ENCODE measurements at regions of chr19 and their contacts with region 1.

Region 1: GRCh38 chr19:42244347-42245220 is 2.2 kb upstream of the GSK3A start:
- DNase-seq: peak; percentile 96
- ATAC-seq: peak; percentile 40
- H3K4me3 ChIP-seq: peak overlapping the region; percentile 67 to 97 (median 87)
- H3K4me3 Mint-ChIP-seq: peak overlapping the region; percentile 100
- H3K27ac ChIP-seq: peak overlapping the region; percentile 64 to 71
- H3K27ac Mint-ChIP-seq: peak overlapping the region; percentile 99
- H3K4me1 ChIP-seq: peaks cover 30 to 40% of the 10 kb centered on the region in 2 donors
- H3K4me1 Mint-ChIP-seq: peaks cover 53% of the 10 kb centered on the region
- H3K27me3 ChIP-seq: no peaks in the 10 kb centered on the region
- H3K27me3 Mint-ChIP-seq: no peaks in the 10 kb centered on the region
- CTCF ChIP-seq: peak; percentile 70

Region 2: DNA sequence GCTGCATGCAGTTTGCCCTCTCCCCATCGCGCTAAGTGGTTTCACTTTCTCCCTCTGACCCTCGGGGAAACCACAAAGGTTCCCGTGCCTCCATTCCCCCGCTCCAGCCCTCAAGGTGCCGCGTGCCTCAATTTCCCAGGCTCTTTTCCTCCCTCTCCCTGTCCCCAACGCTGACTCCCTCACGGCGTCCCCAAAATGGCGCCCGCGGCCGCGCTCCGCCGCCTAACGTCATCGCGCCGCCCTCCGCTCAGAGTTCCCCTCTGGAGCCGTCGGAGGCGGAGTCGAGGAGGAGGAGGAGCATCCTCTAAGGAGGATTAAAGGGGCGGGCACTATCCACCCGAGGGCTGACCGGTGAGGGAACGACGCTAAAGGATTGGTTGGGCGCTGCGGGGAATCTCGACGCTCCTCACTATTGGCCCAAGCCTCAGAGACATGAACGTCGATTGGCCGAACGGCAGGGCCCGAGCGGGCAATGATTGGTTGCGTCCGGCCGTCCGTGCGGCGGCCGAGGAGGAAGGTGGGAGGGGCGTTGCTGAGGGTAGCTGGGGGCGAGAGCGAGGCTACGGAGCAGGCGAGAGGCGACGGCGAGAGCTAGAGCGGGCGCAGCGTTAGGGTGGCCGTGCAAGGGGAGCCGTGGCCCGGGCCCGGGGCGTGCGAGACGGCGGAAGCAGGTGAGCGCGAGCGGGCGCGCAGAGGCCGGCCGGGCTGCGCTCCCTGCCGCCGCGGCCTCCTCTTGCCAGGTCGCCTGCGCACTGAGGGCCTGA is 168.8 kb before region 1 on chr19 and contains the start of gene ZNF574:
- CTCF ChIA-PET with region 1: no interaction called
- POLR2A ChIA-PET with region 1: no interaction called
- intact Hi-C with region 1: loop called (anchors 1 kb)
- DNase-seq: peak; percentile 100
- ATAC-seq: peak; percentile 94
- H3K4me3 ChIP-seq: peak within 1 kb of the TSS; percentile 56 to 93 (median 86)
- H3K4me3 Mint-ChIP-seq: peak within 1 kb of the TSS; percentile 97
- H3K27ac ChIP-seq: peak within 1 kb of the TSS; percentile 95 to 99
- H3K27ac Mint-ChIP-seq: peak within 1 kb of the TSS; percentile 99
- H3K4me1 ChIP-seq: peaks cover 20 to 23% of the 10 kb centered on the region in 2 donors
- H3K4me1 Mint-ChIP-seq: peaks cover 35% of the 10 kb centered on the region
- H3K27me3 ChIP-seq: no peaks in the 10 kb centered on the region
- H3K27me3 Mint-ChIP-seq: peaks cover 5% of the 10 kb centered on the region
- CTCF ChIP-seq: no peak
- total RNA-seq, gene ZNF574: 27.4 and 28.4 TPM in 2 replicates

Region 3: GRCh38 chr19:42132851-42133528 is 111.6 kb before region 1 on chr19:
- CTCF ChIA-PET with region 1: interaction called, 37 read pairs
- POLR2A ChIA-PET with region 1: interaction called, 5 read pairs
- intact Hi-C with region 1: loop called (anchors 1 kb)
- DNase-seq: peak; percentile 93
- ATAC-seq: peak; percentile 42
- H3K4me3 ChIP-seq: peak overlapping the region; percentile 92 to 100 (median 98)
- H3K4me3 Mint-ChIP-seq: peak overlapping the region; percentile 92
- H3K27ac ChIP-seq: peak overlapping the region; percentile 51 to 71
- H3K27ac Mint-ChIP-seq: peak overlapping the region; percentile 97
- H3K4me1 ChIP-seq: peaks cover 41 to 70% of the 10 kb centered on the region in 2 donors
- H3K4me1 Mint-ChIP-seq: peaks cover 77% of the 10 kb centered on the region
- H3K27me3 ChIP-seq: no peaks in the 10 kb centered on the region
- H3K27me3 Mint-ChIP-seq: no peaks in the 10 kb centered on the region
- CTCF ChIP-seq: peak; percentile 100

Region 4: DNA sequence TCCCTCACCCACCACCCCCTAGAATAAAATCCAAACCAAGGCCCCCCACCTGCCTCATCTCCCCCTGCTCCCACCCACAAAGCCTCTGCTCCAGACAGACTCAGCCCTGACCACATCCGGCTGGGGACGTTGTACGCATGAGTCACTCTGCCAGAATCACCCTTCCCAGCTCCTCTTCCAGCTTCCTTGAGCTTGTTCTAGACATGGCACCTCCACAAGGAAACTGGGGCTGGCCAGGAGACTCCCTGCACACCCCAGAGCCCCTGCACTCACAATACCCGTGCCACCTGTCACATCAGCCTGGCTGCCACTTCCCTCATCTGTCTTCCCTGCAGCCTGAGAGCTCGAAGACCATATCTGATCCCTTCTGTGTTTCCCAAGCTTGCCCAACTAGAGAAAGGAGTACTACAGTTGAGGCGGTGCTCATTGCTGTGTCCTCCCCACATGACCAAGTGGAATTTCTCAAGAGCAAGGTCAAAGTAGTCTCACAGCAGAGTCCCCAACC is 36.8 kb before region 1 on chr19:
- CTCF ChIA-PET with region 1: no interaction called
- POLR2A ChIA-PET with region 1: no interaction called
- intact Hi-C with region 1: no loop called
- DNase-seq: no peak
- ATAC-seq: no peak
- H3K4me3 ChIP-seq: no peak overlapping the region
- H3K4me3 Mint-ChIP-seq: no peak overlapping the region
- H3K27ac ChIP-seq: no peak overlapping the region
- H3K27ac Mint-ChIP-seq: peak overlapping the region; percentile 46
- H3K4me1 ChIP-seq: peaks cover 15% of the 10 kb centered on the region in 2 donors
- H3K4me1 Mint-ChIP-seq: peaks cover 42% of the 10 kb centered on the region
- H3K27me3 ChIP-seq: no peaks in the 10 kb centered on the region
- H3K27me3 Mint-ChIP-seq: no peaks in the 10 kb centered on the region
- CTCF ChIP-seq: no peak

Region 5: DNA sequence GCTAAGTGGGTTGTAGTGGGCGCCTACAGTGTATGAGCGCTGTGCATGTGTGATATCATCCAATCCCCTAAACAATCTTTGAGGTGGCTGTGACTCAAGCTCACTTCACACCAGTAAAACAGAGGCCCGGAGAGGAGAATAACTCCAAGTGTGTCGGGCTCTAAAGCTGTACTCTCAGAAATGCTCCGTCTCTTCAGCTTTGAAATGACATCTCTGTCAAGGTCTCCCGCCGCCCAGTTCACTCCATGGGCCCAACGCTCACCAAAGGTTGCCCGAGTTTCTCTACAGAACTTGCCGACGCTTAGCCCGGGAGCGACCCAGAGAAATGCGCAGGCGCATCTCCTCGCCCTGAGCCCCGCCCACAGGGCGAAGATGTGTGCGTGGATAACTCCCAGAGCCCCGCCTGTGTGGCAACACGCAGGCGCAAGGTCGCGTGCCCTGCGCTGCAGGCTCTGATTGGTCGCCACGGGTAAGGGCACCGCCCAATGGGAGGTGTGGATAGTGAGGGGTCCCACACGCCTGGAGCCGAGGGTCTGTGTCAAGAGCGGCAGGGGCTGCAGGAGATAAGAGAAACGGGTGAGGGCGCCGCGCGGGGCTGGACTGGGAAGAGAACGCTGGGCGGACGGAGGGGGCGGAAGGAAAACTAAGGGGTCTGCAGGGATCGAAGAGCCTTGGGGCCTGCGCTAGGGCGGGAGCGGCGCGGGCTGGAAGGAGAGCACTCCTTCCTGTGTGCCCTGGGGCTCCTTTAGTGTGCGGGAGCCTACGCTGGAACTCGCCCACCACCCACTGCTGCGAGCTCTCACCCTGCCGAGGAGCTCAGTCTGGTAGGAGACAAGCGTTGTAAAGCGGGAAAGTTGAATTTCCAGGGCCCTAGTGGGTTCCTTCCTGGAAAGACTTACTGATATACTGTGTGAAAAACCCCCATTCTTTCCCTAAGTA is 24.5 kb before region 1 on chr19 and contains the start of gene ZNF526:
- CTCF ChIA-PET with region 1: interaction called, 12 read pairs
- POLR2A ChIA-PET with region 1: interaction called, 13 read pairs
- intact Hi-C with region 1: loop called (anchors 1 kb)
- DNase-seq: peak; percentile 97
- ATAC-seq: peak; percentile 82
- H3K4me3 ChIP-seq: peak within 1 kb of the TSS; percentile 72 to 96 (median 85)
- H3K4me3 Mint-ChIP-seq: peak within 1 kb of the TSS; percentile 96
- H3K27ac ChIP-seq: peak within 1 kb of the TSS; percentile 66 to 88
- H3K27ac Mint-ChIP-seq: peak within 1 kb of the TSS; percentile 92
- H3K4me1 ChIP-seq: peaks cover 41 to 51% of the 10 kb centered on the region in 2 donors
- H3K4me1 Mint-ChIP-seq: peaks cover 59% of the 10 kb centered on the region
- H3K27me3 ChIP-seq: no peaks in the 10 kb centered on the region
- H3K27me3 Mint-ChIP-seq: no peaks in the 10 kb centered on the region
- CTCF ChIP-seq: no peak
- total RNA-seq, gene ZNF526: 19.0 and 21.3 TPM in 2 replicates

Region 6: DNA sequence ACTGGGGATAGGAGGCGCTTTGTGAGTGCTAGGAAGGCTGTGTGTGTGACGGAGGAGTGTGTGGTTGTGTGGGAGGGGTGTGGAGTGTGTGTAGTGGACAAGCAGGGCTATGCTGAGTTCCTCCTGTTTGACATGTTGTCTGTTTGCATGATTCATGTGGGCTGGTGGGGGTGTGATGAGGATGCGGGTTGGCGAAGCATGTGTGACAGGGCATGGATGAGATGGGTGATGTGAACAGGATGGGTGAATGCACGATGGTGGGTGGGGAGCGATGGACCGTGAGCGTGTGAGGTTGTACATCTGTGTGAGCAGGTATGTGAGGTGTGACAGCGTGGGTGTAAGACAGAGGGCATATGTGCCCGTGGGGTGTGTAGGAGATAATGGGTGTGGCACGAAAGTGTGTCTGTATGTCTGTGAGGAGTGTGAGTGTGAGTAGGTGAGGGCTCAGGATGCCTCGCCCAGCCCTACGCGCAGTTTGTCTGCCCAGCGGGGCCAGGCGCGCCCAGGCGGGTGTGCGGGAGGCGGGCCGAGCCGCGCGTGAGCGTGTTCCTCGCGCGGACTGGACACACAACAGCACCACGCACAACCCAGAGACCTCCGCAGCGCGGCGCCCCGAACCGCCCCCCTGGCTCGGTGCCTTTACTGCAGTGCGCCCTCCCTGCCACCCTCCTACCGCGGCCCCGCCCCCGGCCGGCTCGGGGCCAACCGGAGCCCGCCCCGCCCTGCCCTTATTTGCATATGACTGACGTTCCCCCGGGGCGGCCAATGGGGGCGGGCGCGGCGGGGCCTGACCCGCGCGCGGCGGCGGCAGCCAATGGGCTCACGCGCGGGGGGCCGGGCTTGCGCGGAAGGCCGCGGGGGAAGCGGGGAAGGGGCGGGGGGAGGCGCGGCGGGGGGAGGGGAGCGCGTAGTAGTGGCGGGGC is 38.8 kb after region 1 on chr19:
- CTCF ChIA-PET with region 1: interaction called, 89 read pairs
- POLR2A ChIA-PET with region 1: interaction called, 23 read pairs
- intact Hi-C with region 1: loop called (anchors 1 kb)
- DNase-seq: peak; percentile 98
- ATAC-seq: peak; percentile 64
- H3K4me3 ChIP-seq: peak overlapping the region; percentile 41 to 72 (median 65)
- H3K4me3 Mint-ChIP-seq: no peak overlapping the region
- H3K27ac ChIP-seq: peak overlapping the region; percentile 91 to 96
- H3K27ac Mint-ChIP-seq: no peak overlapping the region
- H3K4me1 ChIP-seq: peaks cover 53 to 65% of the 10 kb centered on the region in 2 donors
- H3K4me1 Mint-ChIP-seq: peaks cover 37% of the 10 kb centered on the region
- H3K27me3 ChIP-seq: no peaks in the 10 kb centered on the region
- H3K27me3 Mint-ChIP-seq: no peaks in the 10 kb centered on the region
- CTCF ChIP-seq: no peak

Region 7: DNA sequence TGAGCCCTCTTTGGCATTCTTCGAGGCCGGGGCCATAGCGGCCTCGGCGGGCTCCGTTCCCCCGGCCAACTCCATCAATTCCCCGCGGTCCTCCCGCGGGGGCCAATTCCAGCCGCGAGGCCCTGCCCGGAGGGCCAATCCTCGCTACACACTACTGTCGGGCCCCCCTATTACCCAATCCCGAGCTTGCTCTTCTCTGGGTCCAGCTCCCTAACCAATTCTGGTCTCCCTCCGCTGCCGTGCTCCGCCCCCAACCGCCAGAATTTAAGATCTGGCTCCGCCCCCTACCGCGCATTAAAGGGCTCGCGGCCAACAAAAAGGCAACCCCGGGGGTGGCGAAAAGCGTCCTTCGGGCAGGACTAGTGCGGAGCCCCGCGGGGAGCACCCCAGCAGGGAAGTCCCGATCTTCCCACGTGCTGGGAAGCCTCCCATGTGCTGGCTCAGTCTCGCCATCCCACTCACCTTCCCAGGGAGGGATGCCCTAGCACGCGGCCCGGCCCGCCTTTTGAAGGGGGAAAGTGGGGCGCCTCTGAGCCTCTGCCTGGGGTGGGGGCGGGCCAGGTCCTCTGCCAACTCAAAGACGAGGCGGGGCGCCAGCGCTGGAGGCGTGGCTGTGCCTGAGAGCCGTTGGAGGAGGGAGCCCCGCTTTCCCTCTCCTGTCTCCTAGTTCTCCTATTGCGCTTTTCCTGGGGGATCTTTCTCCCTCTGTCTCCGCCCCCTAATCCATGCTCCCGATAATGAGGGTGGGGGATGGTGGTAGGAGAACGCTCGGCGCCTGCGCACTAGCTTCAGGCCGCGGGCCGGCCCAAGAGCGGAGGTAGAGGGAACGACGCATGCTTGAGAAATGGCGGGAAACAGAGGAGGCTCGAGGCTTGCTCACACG is 179.1 kb after region 1 on chr19:
- CTCF ChIA-PET with region 1: interaction called, 4 read pairs
- POLR2A ChIA-PET with region 1: interaction called, 4 read pairs
- intact Hi-C with region 1: loop called (anchors 1 kb)
- DNase-seq: peak; percentile 96
- ATAC-seq: peak; percentile 88
- H3K4me3 ChIP-seq: peak overlapping the region; percentile 75 to 98 (median 85)
- H3K4me3 Mint-ChIP-seq: peak overlapping the region; percentile 98
- H3K27ac ChIP-seq: peak overlapping the region; percentile 78 to 85
- H3K27ac Mint-ChIP-seq: peak overlapping the region; percentile 99
- H3K4me1 ChIP-seq: peaks cover 22 to 40% of the 10 kb centered on the region in 2 donors
- H3K4me1 Mint-ChIP-seq: peaks cover 46% of the 10 kb centered on the region
- H3K27me3 ChIP-seq: peaks cover 0 to 2% (median 0%) of the 10 kb centered on the region in 4 experiments
- H3K27me3 Mint-ChIP-seq: no peaks in the 10 kb centered on the region
- CTCF ChIP-seq: no peak